Activated B cell treated with CpG ODN at 0.5 μM for 24 hours (primary cell): ENCODE measurements at regions of chr2 and their contacts with region 1.

Region 1: GRCh38 chr2:143162123-143162837 is 33.1 kb downstream of the ARHGAP15 start:
- DNase-seq: no peak
- ATAC-seq: peak; percentile 95
- H3K4me3 Mint-ChIP-seq: no peak overlapping the region
- H3K27ac Mint-ChIP-seq: peak overlapping the region; percentile 37
- H3K4me1 Mint-ChIP-seq: peaks cover 76% of the 10 kb centered on the region
- H3K27me3 Mint-ChIP-seq: no peaks in the 10 kb centered on the region
- CTCF ChIP-seq: no peak

Region 2: DNA sequence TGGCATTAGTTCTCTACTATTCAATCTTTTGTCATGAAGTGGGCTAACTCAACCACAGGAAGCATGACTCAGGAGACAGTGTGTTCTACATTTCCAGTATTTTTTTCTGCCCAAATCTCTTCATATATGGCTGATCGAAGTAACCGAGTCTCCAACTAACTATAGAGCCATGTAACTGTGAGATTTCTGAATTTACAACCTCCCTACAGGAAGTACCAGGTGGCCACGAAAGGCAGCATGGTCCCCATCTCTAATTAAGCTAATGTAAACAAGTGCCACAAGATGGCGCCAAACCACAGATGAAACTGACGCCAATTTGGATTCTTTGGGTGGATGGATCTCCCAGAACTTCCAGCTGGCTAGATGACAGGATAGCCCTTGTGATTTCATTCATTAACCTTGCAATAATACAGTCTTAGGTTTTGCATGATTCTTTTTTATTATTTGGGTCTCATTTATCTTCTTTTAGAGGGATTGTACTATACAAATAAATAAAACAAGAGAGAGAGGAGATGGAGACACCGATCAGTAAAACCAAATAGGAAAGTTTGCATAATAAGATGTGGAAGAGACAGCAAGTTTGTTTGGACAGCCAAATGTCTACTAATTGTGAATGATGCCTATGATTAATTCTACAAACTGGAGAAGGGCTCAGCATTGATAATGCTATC is 51.4 kb before region 1 on chr2:
- CTCF ChIA-PET with region 1: interaction called, 143 read pairs
- POLR2A ChIA-PET with region 1: interaction called, 5 read pairs
- intact Hi-C with region 1: loop called (anchors 1 kb)
- DNase-seq: no peak
- ATAC-seq: peak; percentile 81
- H3K4me3 Mint-ChIP-seq: no peak overlapping the region
- H3K27ac Mint-ChIP-seq: peak overlapping the region; percentile 50
- H3K4me1 Mint-ChIP-seq: peaks cover 8% of the 10 kb centered on the region
- H3K27me3 Mint-ChIP-seq: no peaks in the 10 kb centered on the region
- CTCF ChIP-seq: peak; percentile 77

Region 3: DNA sequence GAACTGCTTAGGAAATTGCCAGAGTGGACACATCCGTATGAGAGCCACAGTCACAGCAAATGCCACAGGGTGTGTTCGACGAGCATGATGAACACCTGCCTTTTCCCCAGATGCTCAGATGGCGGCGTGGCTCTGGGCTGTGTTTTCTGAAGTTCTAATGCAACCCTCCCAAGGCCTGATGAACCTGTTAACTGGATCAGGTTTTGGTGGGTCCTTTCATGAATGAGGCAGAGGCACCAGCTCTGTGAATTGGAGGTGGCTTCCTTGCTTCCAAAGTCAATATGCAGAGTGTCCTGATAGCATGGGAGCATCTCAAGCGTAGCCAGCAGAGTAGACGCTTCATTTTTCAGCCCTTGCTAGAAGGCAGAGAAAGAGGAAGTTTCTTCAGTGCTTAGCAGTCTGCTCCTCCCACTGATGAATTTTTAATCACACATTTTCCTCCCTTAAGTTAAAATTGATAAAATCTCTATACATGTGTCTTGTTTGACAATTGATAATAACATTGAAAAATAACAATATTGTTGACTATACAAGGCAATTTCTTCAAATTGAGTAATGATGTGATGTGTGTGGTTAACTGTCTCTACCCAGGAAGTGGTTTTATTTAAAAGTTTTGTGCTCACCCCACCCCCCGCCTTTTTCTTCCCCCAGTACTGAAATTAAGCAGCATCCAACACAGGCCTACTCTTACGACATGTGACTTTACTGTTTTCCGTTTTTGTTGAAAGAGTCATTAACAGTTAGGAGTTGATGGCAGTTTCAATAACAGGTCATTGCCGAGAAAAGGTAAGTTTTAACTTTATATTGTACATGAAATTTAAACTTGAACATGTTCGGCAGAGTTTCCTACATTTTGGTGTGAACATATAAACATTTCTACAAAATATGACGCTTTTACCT is 33.3 kb before region 1 on chr2 and contains the start of gene ARHGAP15:
- CTCF ChIA-PET with region 1: interaction called, 28 read pairs
- POLR2A ChIA-PET with region 1: interaction called, 10 read pairs
- intact Hi-C with region 1: loop called (anchors 1 kb)
- DNase-seq: peak; percentile 61
- ATAC-seq: peak; percentile 91
- H3K4me3 Mint-ChIP-seq: peak within 1 kb of the TSS; percentile 84
- H3K27ac Mint-ChIP-seq: peak within 1 kb of the TSS; percentile 100
- H3K4me1 Mint-ChIP-seq: peaks cover 49% of the 10 kb centered on the region
- H3K27me3 Mint-ChIP-seq: no peaks in the 10 kb centered on the region
- CTCF ChIP-seq: no peak
- total RNA-seq, gene ARHGAP15: 101 and 112 TPM in 2 replicates

Region 4: GRCh38 chr2:143150287-143150686 is 12.0 kb before region 1 on chr2:
- CTCF ChIA-PET with region 1: interaction called, 5 read pairs
- POLR2A ChIA-PET with region 1: interaction called, 7 read pairs
- intact Hi-C with region 1: loop called (anchors 1 kb)
- DNase-seq: no peak
- ATAC-seq: peak; percentile 89
- H3K4me3 Mint-ChIP-seq: peak overlapping the region; percentile 56
- H3K27ac Mint-ChIP-seq: peak overlapping the region; percentile 87
- H3K4me1 Mint-ChIP-seq: peaks cover 91% of the 10 kb centered on the region
- H3K27me3 Mint-ChIP-seq: no peaks in the 10 kb centered on the region
- CTCF ChIP-seq: no peak

Region 5: DNA sequence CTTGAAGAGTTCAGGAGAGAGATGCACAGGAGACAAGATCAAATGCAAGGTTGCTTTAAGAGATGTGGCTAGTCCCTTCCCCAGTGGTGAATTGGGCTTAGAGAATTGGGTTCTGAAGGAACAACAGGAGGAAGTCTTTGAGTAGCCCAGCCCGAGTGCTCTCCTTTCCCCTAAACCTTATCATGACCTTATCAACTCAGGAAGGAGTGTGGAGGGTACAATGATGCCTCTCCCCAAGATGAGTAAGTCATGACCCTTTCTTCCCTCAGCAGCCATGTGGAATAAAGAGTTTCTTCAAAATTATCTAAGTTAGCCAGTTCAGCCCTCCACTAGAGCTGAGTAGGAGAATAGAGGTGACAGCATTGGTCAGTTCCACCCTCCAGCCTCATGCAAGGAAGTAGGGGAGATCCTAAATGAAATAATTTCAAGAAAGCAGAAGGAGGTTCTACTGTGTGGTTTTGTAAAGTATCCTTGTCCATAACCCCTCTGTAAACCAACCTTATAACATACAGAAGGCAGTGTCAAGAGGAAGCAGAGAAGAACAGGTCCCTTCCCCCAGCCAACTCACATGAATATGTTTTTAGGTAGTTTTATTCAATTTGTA is 55.3 kb after region 1 on chr2:
- CTCF ChIA-PET with region 1: interaction called, 68 read pairs
- POLR2A ChIA-PET with region 1: interaction called, 4 read pairs
- intact Hi-C with region 1: loop called (anchors 1 kb)
- DNase-seq: no peak
- ATAC-seq: no peak
- H3K4me3 Mint-ChIP-seq: no peak overlapping the region
- H3K27ac Mint-ChIP-seq: peak overlapping the region; percentile 38
- H3K4me1 Mint-ChIP-seq: peaks cover 16% of the 10 kb centered on the region
- H3K27me3 Mint-ChIP-seq: no peaks in the 10 kb centered on the region
- CTCF ChIP-seq: no peak